Caco-2 (cell line): ENCODE measurements at regions of chr4 and their contacts with region 1.

Region 1: GRCh38 chr4:113673450-113673849 is 88.1 kb downstream of the CAMK2D start:
- DNase-seq: peak; percentile 39 to 53
- H3K4me3 ChIP-seq: no peak overlapping the region
- H3K4me3 Mint-ChIP-seq: no peak overlapping the region
- H3K27ac Mint-ChIP-seq: no peak overlapping the region
- H3K4me1 ChIP-seq: peaks cover 13% of the 10 kb centered on the region; the same call in 1 of the 2 replicates
- H3K4me1 Mint-ChIP-seq: peaks cover 8% of the 10 kb centered on the region
- H3K27me3 ChIP-seq: no peaks in the 10 kb centered on the region
- H3K27me3 Mint-ChIP-seq: no peaks in the 10 kb centered on the region
- CTCF ChIP-seq: no peak

Region 2: DNA sequence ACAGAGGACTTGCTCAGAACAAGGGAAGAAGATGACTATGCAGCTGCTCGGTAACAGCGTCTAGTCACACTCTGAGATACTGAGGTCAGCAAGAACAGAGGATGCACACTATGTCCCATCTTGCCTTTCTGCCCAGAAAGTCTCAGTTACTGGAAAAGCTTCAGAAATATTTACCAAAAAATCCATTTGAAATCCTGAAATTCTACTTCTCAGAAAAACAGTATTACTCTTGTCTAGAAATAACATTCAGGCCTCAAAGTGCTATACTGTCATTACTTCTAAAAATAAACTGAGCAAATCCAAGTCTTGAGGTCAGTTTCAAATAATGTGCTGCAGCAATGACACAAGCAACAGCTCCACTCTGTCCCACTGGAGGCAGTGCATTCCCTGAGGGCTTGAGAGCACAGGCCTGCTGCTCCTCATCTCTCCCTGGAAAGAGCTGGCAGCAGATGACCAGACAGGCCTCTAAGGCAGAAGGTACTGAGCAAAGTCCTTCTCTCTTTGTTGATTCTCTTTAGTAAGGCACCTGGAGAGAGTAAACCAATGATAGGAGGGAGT is 11.2 kb after region 1 on chr4:
- CTCF ChIA-PET with region 1: interaction called, 5 read pairs
- POLR2A ChIA-PET with region 1: interaction called, 4 read pairs
- intact Hi-C with region 1: loop called (anchors 1 kb)
- DNase-seq: peak; percentile 76 to 89
- H3K4me3 ChIP-seq: no peak overlapping the region
- H3K4me3 Mint-ChIP-seq: no peak overlapping the region
- H3K27ac Mint-ChIP-seq: no peak overlapping the region
- H3K4me1 ChIP-seq: peaks cover 52% of the 10 kb centered on the region
- H3K4me1 Mint-ChIP-seq: peaks cover 47% of the 10 kb centered on the region
- H3K27me3 ChIP-seq: no peaks in the 10 kb centered on the region
- H3K27me3 Mint-ChIP-seq: no peaks in the 10 kb centered on the region
- CTCF ChIP-seq: peak; percentile 31 to 46

Region 3: GRCh38 chr4:113773014-113773413 is 99.6 kb after region 1 on chr4:
- CTCF ChIA-PET with region 1: no interaction called
- POLR2A ChIA-PET with region 1: no interaction called
- intact Hi-C with region 1: no loop called
- DNase-seq: no peak
- H3K4me3 ChIP-seq: no peak overlapping the region
- H3K4me3 Mint-ChIP-seq: no peak overlapping the region
- H3K27ac Mint-ChIP-seq: no peak overlapping the region
- H3K4me1 ChIP-seq: no peaks in the 10 kb centered on the region
- H3K4me1 Mint-ChIP-seq: no peaks in the 10 kb centered on the region
- H3K27me3 ChIP-seq: no peaks in the 10 kb centered on the region
- H3K27me3 Mint-ChIP-seq: no peaks in the 10 kb centered on the region
- CTCF ChIP-seq: no peak